Mammary epithelial cell (primary cell): ENCODE measurements at regions of chr18 and their contacts with region 1.

Region 1: DNA sequence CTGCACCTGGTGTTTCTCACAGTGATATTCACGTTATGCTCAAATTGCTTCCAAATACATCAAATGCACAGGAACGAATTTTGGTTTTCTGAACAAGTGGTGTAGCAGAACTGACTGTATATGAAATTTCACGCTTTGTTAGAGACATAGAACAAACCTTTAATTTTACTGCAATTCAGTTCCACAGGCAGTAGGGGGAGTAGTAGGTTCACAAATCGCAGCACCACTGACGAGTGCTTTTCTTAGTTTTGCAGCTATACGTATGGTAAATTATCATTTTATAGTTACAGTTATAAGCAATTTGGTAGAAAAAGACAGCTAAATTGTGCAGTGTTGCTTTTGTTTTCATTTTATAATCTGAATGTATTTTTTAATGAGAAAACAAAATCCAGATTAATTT is 113.3 kb downstream of the KIAA1328 start:
- DNase-seq: peak; percentile 23
- H3K4me3 ChIP-seq: no peak overlapping the region
- H3K27ac ChIP-seq: no peak overlapping the region
- H3K4me1 ChIP-seq: no peaks in the 10 kb centered on the region
- H3K27me3 ChIP-seq: no peaks in the 10 kb centered on the region
- CTCF ChIP-seq: peak; percentile 71 to 79

Region 2: GRCh38 chr18:37253394-37254235 is 311.4 kb after region 1 on chr18:
- CTCF ChIA-PET with region 1: no interaction called
- dilution Hi-C with region 1: no loop called
- in situ Hi-C with region 1: no loop called
- intact Hi-C with region 1: loop called (anchors 1 kb)
- DNase-seq: no peak
- H3K4me3 ChIP-seq: peak overlapping the region in 2 of 3 experiments; percentile 38 to 39
- H3K27ac ChIP-seq: no peak overlapping the region
- H3K4me1 ChIP-seq: peaks cover 3% of the 10 kb centered on the region
- H3K27me3 ChIP-seq: no peaks in the 10 kb centered on the region
- CTCF ChIP-seq: no peak

Region 3: DNA sequence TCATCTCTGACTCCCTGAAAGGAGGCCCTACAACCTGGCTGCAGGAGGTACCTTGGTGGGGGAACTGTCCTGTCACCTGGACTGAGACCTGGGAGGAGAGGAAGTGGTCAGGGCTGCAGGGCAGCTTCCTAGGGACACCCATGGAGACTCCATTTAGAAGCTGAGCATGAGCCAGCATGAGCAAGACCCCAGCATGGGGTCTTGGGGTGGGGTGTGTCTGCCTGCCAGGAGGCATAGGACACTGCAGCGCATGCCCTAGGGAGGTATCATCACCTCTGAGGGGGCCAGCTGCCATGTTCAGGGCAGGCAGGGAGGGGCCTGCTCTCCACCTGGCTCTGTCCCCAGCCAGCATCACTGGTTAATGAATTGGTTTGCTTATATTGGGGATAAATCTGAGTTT is 373.7 kb after region 1 on chr18:
- CTCF ChIA-PET with region 1: no interaction called
- dilution Hi-C with region 1: no loop called
- in situ Hi-C with region 1: no loop called
- intact Hi-C with region 1: loop called (anchors 5 kb)
- DNase-seq: no peak
- H3K4me3 ChIP-seq: no peak overlapping the region
- H3K27ac ChIP-seq: no peak overlapping the region
- H3K4me1 ChIP-seq: no peaks in the 10 kb centered on the region
- H3K27me3 ChIP-seq: no peaks in the 10 kb centered on the region
- CTCF ChIP-seq: no peak

Region 4: GRCh38 chr18:37346048-37346447 is 403.8 kb after region 1 on chr18:
- CTCF ChIA-PET with region 1: no interaction called
- dilution Hi-C with region 1: no loop called
- in situ Hi-C with region 1: no loop called
- intact Hi-C with region 1: loop called (anchors 10 kb)
- DNase-seq: no peak
- H3K4me3 ChIP-seq: no peak overlapping the region
- H3K27ac ChIP-seq: no peak overlapping the region
- H3K4me1 ChIP-seq: peaks cover 4% of the 10 kb centered on the region
- H3K27me3 ChIP-seq: no peaks in the 10 kb centered on the region
- CTCF ChIP-seq: no peak

Region 5: DNA sequence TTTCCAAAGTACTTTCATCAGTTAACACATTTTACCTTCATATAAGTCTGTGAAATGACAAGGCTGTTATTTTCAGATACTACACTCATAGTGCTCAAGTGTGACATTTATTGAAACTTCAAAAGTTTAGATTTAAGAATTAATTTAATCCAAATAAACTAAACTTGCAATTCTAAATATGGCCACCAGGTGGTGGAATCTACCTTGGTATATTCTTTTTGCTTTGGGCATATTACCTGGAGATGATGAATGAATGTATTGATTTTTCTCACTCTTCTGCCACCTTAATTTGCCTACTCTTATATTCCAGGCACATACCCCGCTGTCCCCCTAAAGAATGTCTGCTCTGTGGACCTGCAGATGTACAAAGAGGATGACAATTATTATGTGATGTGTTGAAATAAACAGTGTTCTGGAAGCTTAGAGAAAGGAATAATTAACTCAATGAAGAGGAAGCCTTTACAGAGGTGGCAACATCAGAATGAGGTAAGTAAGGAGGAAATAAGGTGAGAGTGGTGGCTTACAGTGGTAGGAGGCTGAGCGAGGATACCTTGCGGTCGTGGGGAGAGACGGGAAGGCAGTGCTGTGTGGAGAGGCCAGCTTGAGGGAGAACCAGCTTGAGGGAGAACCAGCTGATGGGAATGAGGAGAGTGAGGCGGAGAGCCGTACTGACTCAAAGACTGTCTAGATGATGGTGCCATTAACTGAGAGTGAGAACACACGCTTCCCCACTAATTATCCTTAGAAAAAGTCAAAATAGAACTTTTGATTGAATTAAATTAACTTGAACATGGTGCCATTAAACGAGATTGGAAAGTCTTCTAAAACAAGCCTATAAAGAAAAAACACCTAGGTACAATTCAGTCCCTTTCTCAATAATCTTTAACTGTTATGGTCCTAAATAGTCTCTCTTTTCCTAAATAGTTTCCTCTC is 443.8 kb after region 1 on chr18:
- CTCF ChIA-PET with region 1: no interaction called
- dilution Hi-C with region 1: no loop called
- in situ Hi-C with region 1: no loop called
- intact Hi-C with region 1: loop called (anchors 5 kb)
- DNase-seq: peak; percentile 8
- H3K4me3 ChIP-seq: no peak overlapping the region
- H3K27ac ChIP-seq: no peak overlapping the region
- H3K4me1 ChIP-seq: no peaks in the 10 kb centered on the region
- H3K27me3 ChIP-seq: no peaks in the 10 kb centered on the region
- CTCF ChIP-seq: peak; percentile 59 to 61

Region 6: DNA sequence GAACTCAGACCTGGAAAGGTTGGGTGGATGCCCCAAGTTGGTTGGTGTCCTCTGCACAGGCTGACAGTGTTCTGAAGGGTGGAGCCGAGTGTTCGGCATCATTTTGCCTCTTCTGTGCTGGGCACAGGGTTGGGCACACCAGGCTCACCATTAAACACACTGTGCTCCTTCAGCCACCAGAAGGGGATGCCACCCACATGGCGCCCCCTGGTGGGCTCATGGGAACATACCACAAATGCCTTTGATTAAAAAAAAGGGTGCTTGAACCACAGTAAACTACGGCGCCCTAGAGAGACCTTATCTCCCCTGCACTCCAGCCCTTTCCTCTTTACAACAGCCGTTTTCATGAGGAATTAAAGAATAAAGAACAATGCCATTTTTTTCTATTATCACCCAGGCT is 533.9 kb after region 1 on chr18:
- CTCF ChIA-PET with region 1: no interaction called
- dilution Hi-C with region 1: no loop called
- in situ Hi-C with region 1: no loop called
- intact Hi-C with region 1: loop called (anchors 1 kb)
- DNase-seq: peak; percentile 9
- H3K4me3 ChIP-seq: no peak overlapping the region
- H3K27ac ChIP-seq: no peak overlapping the region
- H3K4me1 ChIP-seq: no peaks in the 10 kb centered on the region
- H3K27me3 ChIP-seq: no peaks in the 10 kb centered on the region
- CTCF ChIP-seq: peak; percentile 31 to 61

Region 7: DNA sequence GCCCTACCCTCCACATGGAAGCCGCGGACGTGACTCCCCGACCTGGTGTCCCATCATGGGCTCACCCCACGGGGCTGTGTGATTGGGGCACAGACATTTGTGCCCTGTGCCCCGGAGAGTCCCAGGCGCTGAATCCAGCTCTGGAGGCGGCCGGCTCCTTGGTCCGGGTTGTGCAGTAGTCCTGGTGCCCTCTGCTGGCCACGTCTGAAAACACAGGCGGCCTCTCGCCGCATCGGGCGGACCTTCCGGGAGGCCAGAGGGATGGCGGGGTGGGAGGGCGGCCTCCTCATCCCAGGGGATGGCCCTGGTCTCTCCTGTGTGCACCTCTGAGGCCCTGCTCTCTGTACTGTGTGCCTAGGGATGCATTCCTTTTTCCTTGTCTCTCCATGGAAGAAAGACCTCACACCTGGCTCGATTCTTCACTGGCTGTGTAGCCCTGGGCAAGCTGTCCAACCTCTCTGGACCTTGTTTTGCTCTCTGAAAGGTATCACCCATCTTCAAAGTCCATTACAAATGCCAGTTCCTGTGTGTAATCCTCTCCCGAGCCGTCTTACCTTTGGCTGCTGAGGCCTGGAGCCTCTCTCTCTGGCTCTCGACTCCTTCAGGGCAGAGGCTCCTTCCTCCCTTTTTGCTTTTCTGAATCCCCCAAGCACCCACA is 595.7 kb after region 1 on chr18:
- CTCF ChIA-PET with region 1: interaction called, 4 read pairs
- dilution Hi-C with region 1: no loop called
- in situ Hi-C with region 1: loop called in 1 of 2 experiments (anchors 10 kb)
- intact Hi-C with region 1: no loop called
- DNase-seq: peak; percentile 37
- H3K4me3 ChIP-seq: no peak overlapping the region
- H3K27ac ChIP-seq: no peak overlapping the region
- H3K4me1 ChIP-seq: no peaks in the 10 kb centered on the region
- H3K27me3 ChIP-seq: peaks cover 13% of the 10 kb centered on the region
- CTCF ChIP-seq: peak; percentile 58 to 85